ENCODE measurements at regions of chr11 and their contacts with region 1.

Region 1: GRCh38 chr11:47766305-47767227 is 575 bp downstream of the FNBP4 start:
- DNase-seq: peak in 1 of 2 experiments; percentile 56
- H3K4me3 ChIP-seq: peak overlapping the region; percentile 81
- H3K27ac ChIP-seq: peak overlapping the region; percentile 83
- H3K4me1 ChIP-seq: peaks cover 22% of the 10 kb centered on the region
- H3K27me3 ChIP-seq: no peaks in the 10 kb centered on the region
- CTCF ChIP-seq: no peak

Region 2: DNA sequence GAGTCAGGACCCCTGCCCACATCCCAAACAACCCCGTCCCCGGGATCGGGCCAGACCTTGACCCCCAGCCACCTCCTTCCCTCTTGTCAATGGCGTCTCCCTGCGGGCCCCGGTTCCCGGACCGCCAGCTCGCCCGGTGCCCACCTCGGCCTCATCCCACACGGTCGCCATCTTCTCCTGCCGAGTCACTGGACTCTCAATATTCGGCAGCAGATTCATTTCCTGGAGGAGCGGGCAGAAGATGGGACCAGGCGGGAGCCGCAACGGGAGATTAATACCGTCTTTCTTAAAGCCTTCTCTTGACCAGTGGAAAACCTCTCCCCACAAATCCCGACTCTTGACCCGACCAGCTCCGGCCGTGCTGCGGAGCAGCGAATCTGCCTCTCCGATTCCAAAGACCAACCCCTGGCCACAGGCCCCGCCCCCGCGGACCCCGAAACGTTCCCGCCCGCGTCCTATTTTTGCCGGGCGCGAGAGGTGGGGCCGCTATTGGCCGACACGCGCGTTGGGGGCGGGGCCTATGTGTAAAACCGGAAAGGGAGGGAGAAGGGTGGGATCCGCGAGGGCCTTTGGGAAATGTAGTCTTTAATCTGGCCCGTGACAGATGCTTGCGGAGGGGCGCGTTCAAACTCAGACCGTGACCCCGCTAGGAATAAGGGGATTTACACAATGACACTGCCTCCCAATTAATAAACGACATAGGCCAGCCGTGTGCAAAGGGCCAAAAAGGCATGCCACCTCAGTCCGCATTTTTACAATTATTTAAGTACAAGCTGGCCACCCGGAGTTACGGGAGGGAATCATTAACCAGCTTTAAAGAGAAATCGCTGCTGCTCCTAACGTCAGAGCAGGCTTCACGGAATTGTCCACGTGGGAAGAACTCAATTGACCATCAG is 340.3 kb before region 1 on chr11 and contains the start of gene PSMC3:
- CTCF ChIA-PET with region 1: no interaction called
- POLR2A ChIA-PET with region 1: no interaction called
- intact Hi-C with region 1: loop called (anchors 5 kb)
- DNase-seq: peak; percentile 89 to 99
- H3K4me3 ChIP-seq: peak within 1 kb of the TSS; percentile 86
- H3K27ac ChIP-seq: peak within 1 kb of the TSS; percentile 73
- H3K4me1 ChIP-seq: peaks cover 18% of the 10 kb centered on the region
- H3K27me3 ChIP-seq: no peaks in the 10 kb centered on the region
- CTCF ChIP-seq: no peak
- total RNA-seq, gene PSMC3: 160 and 222 TPM in 2 replicates

Region 3: DNA sequence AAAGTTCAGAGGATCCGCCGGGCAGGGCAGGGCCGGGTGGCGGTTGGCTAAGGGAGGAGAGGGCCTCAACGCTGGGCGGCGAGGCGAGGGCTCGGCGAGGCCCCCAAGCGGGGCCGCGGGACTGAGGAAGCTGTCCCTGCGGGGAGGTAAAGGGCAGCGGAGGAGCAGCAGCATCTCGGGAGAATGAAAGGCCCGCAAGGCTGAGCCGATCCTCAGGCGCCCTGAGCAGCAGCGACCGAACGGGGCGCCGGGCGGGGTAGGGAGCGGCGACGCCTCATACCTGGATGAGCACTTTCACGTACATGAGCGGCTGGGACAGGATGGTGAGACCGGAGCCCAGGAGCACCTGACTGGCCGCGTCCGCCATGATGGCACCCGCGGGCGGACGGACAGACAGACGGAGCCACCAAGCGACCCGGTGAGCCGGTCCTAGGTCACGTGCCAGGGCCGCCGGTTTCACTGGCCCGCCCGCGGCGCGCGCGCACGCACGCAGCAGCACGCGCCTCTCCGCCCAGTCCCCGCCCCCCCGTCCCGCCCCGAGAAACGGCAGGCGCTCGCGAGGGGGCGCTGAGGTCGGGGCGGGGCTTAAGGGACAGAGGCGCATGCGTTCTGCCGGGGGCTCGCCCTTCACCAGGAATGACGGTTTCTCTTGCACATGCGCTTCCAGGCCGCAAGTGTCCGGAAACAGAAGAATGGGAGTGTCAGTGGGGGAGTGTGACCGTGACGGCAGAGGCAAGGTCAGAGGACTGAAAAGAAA is 124.3 kb before region 1 on chr11 and contains the start of gene MTCH2:
- CTCF ChIA-PET with region 1: no interaction called
- POLR2A ChIA-PET with region 1: no interaction called
- intact Hi-C with region 1: loop called (anchors 2 kb)
- DNase-seq: peak; percentile 86 to 98
- H3K4me3 ChIP-seq: peak within 1 kb of the TSS; percentile 94
- H3K27ac ChIP-seq: peak within 1 kb of the TSS; percentile 74
- H3K4me1 ChIP-seq: peaks cover 9% of the 10 kb centered on the region
- H3K27me3 ChIP-seq: no peaks in the 10 kb centered on the region
- CTCF ChIP-seq: peak; percentile 18; the same call in 1 of the 2 replicates
- total RNA-seq, gene MTCH2: 147 and 167 TPM in 2 replicates

Region 4: GRCh38 chr11:47672283-47672730 is 94.3 kb before region 1 on chr11:
- CTCF ChIA-PET with region 1: no interaction called
- POLR2A ChIA-PET with region 1: interaction called, 15 read pairs
- intact Hi-C with region 1: no loop called
- DNase-seq: peak in 1 of 2 experiments; percentile 49
- H3K4me3 ChIP-seq: no peak overlapping the region
- H3K27ac ChIP-seq: peak overlapping the region; percentile 0; the same call in 1 of the 2 replicates
- H3K4me1 ChIP-seq: peaks cover 21% of the 10 kb centered on the region
- H3K27me3 ChIP-seq: no peaks in the 10 kb centered on the region
- CTCF ChIP-seq: no peak

Region 5: GRCh38 chr11:47847892-47848635 is 81.5 kb after region 1 on chr11 and contains the start of gene NUP160:
- CTCF ChIA-PET with region 1: no interaction called
- POLR2A ChIA-PET with region 1: interaction called, 5 read pairs
- intact Hi-C with region 1: loop called (anchors 2 kb)
- DNase-seq: peak; percentile 60 to 84
- H3K4me3 ChIP-seq: peak within 1 kb of the TSS; percentile 96
- H3K27ac ChIP-seq: peak within 1 kb of the TSS; percentile 72
- H3K4me1 ChIP-seq: peaks cover 16% of the 10 kb centered on the region
- H3K27me3 ChIP-seq: no peaks in the 10 kb centered on the region
- CTCF ChIP-seq: no peak
- total RNA-seq, gene NUP160: 61.7 and 73.2 TPM in 2 replicates

Measured in PC-9 (cell line).